A673 (cell line): ENCODE measurements at regions of chr1 and their contacts with region 1.

Region 1: GRCh38 chr1:61797045-61797755 is 54.9 kb downstream of the PATJ start:
- DNase-seq: peak; percentile 5
- H3K4me3 ChIP-seq: no peak overlapping the region
- H3K27ac ChIP-seq: no peak overlapping the region
- H3K4me1 ChIP-seq: no peaks in the 10 kb centered on the region
- H3K27me3 ChIP-seq: no peaks in the 10 kb centered on the region
- CTCF ChIP-seq: no peak

Region 2: DNA sequence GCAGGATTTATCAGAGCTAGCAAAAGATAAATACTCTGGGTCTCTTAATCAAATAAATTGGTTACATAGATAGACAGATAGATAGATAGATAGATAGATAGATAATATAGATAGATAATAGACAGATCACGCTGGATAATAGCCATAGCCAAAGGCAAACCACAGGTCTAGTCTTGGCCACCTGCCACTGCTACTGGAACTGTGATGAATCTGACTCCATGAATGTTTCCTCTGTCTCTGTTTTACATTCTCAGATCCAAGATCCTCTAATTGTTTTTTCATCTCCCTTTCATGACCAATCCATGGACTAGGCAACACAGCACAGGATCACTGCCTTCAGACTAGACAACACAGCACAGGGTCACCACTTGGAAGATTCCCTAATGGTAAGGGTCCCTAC is 1159.5 kb before region 1 on chr1:
- CTCF ChIA-PET with region 1: no interaction called
- POLR2A ChIA-PET with region 1: no interaction called
- intact Hi-C with region 1: no loop called
- DNase-seq: no peak
- H3K4me3 ChIP-seq: no peak overlapping the region
- H3K27ac ChIP-seq: no peak overlapping the region
- H3K4me1 ChIP-seq: no peaks in the 10 kb centered on the region
- H3K27me3 ChIP-seq: peaks cover 50% of the 10 kb centered on the region
- CTCF ChIP-seq: no peak

Region 3: GRCh38 chr1:63773815-63774616 is 1976.8 kb after region 1 on chr1 and contains the start of gene ROR1:
- CTCF ChIA-PET with region 1: no interaction called
- POLR2A ChIA-PET with region 1: interaction called, 14 read pairs
- intact Hi-C with region 1: no loop called
- DNase-seq: peak; percentile 93
- H3K4me3 ChIP-seq: peak within 1 kb of the TSS; percentile 80
- H3K27ac ChIP-seq: peak within 1 kb of the TSS; percentile 52
- H3K4me1 ChIP-seq: peaks cover 15% of the 10 kb centered on the region
- H3K27me3 ChIP-seq: no peaks in the 10 kb centered on the region
- CTCF ChIP-seq: peak; percentile 83
- total RNA-seq, gene ROR1: 7.4 and 8.3 TPM in 2 replicates